ENCODE measurements at regions of chr1 and their contacts with region 1.

Region 1: GRCh38 chr1:15835741-15836510 is 11.6 kb upstream of the SPEN start:
- DNase-seq: peak; percentile 100
- ATAC-seq: peak; percentile 88 to 93 (median 92)
- H3K4me3 ChIP-seq: peak overlapping the region; percentile 59 to 96 (median 74)
- H3K27ac ChIP-seq: peak overlapping the region; percentile 97 to 100 (median 100)
- H3K4me1 ChIP-seq: peaks cover 0 to 42% (median 13%) of the 10 kb centered on the region in 12 donors
- H3K27me3 ChIP-seq: no peaks in the 10 kb centered on the region
- CTCF ChIP-seq: peak in 1 of 12 donors; percentile 2
- POLR2A ChIP-seq: peak in 1 of 2 donors; percentile 79

Region 2: GRCh38 chr1:15847100-15847892 is 11.4 kb after region 1 on chr1 and contains the start of gene SPEN:
- intact Hi-C with region 1: loop called in 7 of 10 experiments (anchors 1 kb)
- DNase-seq: peak; percentile 98 to 100 (median 99)
- ATAC-seq: peak; percentile 68 to 96 (median 90)
- H3K4me3 ChIP-seq: peak within 1 kb of the TSS; percentile 49 to 97 (median 82)
- H3K27ac ChIP-seq: peak within 1 kb of the TSS; percentile 86 to 99 (median 95)
- H3K4me1 ChIP-seq: peaks cover 11 to 57% (median 41%) of the 10 kb centered on the region in 12 donors
- H3K27me3 ChIP-seq: no peaks in the 10 kb centered on the region
- CTCF ChIP-seq: peak in 2 of 12 donors; percentile 12 to 17
- POLR2A ChIP-seq: peak; percentile 20 to 88
- total RNA-seq, gene SPEN: 18.3 to 41.5 (median 31.3) TPM

Region 3: DNA sequence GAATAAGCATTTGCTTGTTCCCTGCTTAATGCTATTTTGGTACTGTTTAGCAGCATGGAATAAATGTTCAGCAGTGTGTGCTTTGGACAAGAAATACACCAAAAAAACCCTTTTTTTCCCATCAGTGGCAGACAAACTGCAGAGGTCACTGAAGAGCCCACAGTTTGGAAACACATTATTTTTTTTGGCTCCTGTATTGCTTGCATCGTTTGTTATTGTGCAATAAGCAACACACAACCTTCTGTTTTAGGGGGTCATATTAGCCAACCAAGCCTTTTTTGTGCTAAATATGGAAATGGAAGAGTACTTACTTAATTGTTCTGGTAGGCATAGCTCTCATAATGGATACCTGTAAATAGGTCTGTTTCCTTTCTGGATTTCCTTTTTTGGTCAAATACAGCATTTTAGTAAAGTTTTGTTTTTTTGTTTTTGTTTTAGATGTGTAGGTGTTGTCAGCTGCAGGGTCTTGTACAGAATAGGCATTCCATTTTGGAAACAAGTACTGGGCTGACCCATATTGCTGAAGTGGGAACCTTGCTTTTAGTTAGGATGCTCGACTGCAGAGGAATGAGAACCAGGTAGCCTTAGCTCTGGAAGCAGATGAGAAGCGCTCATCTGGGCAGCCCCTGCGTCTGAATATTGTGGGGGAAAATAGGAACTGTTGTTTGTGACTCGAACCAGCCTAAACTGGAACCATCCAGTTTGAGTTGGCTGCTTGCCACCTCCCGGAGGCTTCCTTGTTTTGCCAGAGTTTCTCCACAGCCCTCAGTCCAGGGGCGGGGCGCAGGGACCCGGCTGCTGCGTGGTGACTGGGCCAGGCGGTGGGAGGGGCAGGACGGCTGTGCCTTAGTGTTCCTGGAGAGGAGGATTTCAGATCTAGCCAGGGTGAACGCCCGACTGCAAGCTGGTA is 50.0 kb after region 1 on chr1:
- intact Hi-C with region 1: loop called in 3 of 10 experiments (anchors 2 to 10 kb)
- DNase-seq: peak; percentile 96 to 99 (median 97)
- ATAC-seq: peak; percentile 98 to 99 (median 98)
- H3K4me3 ChIP-seq: peak overlapping the region in 11 of 12 donors; percentile 17 to 57 (median 49)
- H3K27ac ChIP-seq: peak overlapping the region; percentile 74 to 97 (median 88)
- H3K4me1 ChIP-seq: peaks cover 0 to 65% (median 38%) of the 10 kb centered on the region in 12 donors
- H3K27me3 ChIP-seq: no peaks in the 10 kb centered on the region
- CTCF ChIP-seq: peak in 5 of 12 donors; percentile 9 to 44 (median 34)
- POLR2A ChIP-seq: peak in 1 of 2 donors; percentile 66

Region 4: GRCh38 chr1:15963968-15964648 is 128.2 kb after region 1 on chr1:
- intact Hi-C with region 1: no loop called
- DNase-seq: no peak
- ATAC-seq: no peak
- H3K4me3 ChIP-seq: no peak overlapping the region
- H3K27ac ChIP-seq: peak overlapping the region in 1 of 12 donors; percentile 85
- H3K4me1 ChIP-seq: peaks cover 0 to 70% (median 22%) of the 10 kb centered on the region in 12 donors
- H3K27me3 ChIP-seq: no peaks in the 10 kb centered on the region
- CTCF ChIP-seq: no peak
- POLR2A ChIP-seq: no peak

Region 5: GRCh38 chr1:15975805-15976680 is 140.1 kb after region 1 on chr1 and contains the start of gene ZBTB17:
- intact Hi-C with region 1: loop called in 1 of 10 experiments (anchors 10 kb)
- DNase-seq: peak; percentile 93 to 97 (median 96)
- ATAC-seq: peak; percentile 98 to 99 (median 99)
- H3K4me3 ChIP-seq: peak within 1 kb of the TSS; percentile 73 to 98 (median 79)
- H3K27ac ChIP-seq: peak within 1 kb of the TSS in 11 of 12 donors; percentile 67 to 91 (median 82)
- H3K4me1 ChIP-seq: peaks cover 0 to 29% (median 12%) of the 10 kb centered on the region in 12 donors
- H3K27me3 ChIP-seq: no peaks in the 10 kb centered on the region
- CTCF ChIP-seq: peak in 1 of 12 donors; percentile 5
- POLR2A ChIP-seq: peak in 1 of 2 donors; percentile 65
- total RNA-seq, gene ZBTB17: 14.5 to 29.2 (median 20.7) TPM